HepG2 (cell line): ENCODE measurements at regions of chr10 and their contacts with region 1.

Region 1: DNA sequence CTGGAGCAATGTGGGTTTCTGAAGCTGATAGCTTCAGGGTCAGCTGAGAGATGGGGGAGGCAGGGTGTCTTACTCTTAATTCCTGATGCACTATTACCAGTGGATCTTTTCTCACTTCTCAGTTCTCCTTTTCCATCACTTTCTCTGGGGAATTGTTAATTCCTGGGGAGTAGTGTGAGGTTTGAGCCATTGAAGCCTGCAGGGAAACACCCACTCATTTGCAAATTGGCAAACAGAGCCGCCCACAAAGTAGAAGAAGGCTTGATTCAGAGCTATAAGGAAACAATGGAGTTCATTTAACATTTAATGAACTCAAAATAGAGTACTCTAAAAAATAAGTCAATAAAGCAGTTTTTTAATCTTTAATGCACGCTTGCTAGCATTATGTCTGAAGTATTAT is 4.3 kb upstream of the TECTB start:
- DNase-seq: no peak
- ATAC-seq: no peak
- H3K4me3 ChIP-seq: no peak overlapping the region
- H3K27ac ChIP-seq: peak overlapping the region; percentile 60
- H3K4me1 ChIP-seq: peaks cover 77% of the 10 kb centered on the region
- H3K27me3 ChIP-seq: no peaks in the 10 kb centered on the region
- CTCF ChIP-seq: no peak
- EP300 ChIP-seq: no peak
- POLR2A ChIP-seq: no peak
- RAD21 ChIP-seq: no peak

Region 2: DNA sequence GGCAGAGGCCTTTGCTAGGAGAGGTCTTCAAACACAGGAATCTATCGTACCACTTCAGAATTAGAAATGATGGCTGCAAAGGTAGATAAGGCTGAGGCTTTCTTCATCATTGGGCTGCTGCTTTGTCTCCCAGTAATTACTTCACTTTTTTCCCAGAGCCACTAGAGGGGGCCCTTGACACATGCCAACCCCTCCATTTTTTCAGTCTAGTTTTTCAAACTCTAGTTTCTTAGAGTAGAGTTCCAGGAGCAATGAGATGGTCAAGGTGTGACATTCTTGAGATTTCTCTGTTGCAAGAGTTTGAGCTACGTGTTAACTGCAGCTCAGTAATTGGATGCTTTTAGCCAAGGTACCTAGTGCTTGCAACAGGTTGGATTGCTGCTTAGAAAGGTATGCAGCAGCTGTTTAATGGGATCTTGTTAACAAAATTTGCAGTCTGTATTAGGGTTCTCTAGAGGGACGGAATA is 1668.5 kb before region 1 on chr10:
- CTCF ChIA-PET with region 1: no interaction called
- POLR2A ChIA-PET with region 1: no interaction called
- in situ Hi-C with region 1: no loop called
- intact Hi-C with region 1: loop called (anchors 5 kb)
- DNase-seq: peak; percentile 44
- ATAC-seq: peak; percentile 79
- H3K4me3 ChIP-seq: no peak overlapping the region
- H3K27ac ChIP-seq: no peak overlapping the region
- H3K4me1 ChIP-seq: no peaks in the 10 kb centered on the region
- H3K27me3 ChIP-seq: no peaks in the 10 kb centered on the region; a peak in 1 of 5 replicates
- CTCF ChIP-seq: peak; percentile 79
- EP300 ChIP-seq: no peak
- POLR2A ChIP-seq: no peak
- RAD21 ChIP-seq: peak; percentile 72; the same call in 1 of the 2 replicates

Region 3: DNA sequence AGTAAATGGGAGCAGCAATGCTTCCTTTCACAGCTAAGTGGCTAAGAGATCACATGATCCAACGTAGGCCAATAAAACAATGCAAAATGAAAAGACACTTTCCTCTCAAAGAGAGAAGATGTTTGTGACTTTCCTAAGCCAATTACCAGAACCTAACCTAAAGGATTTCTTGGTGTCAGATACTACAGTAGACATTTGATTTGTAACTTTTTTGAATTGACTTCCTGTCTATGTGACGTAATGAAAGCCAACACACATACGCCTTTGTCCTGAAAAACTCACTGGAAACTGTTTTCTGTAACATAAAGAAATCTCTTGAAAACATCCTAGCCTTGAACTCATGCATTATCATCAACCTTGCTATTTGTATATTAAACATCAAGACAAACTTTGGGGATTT is 512.4 kb before region 1 on chr10:
- CTCF ChIA-PET with region 1: no interaction called
- POLR2A ChIA-PET with region 1: no interaction called
- in situ Hi-C with region 1: no loop called
- intact Hi-C with region 1: no loop called
- DNase-seq: no peak
- ATAC-seq: no peak
- H3K4me3 ChIP-seq: no peak overlapping the region
- H3K27ac ChIP-seq: no peak overlapping the region
- H3K4me1 ChIP-seq: no peaks in the 10 kb centered on the region
- H3K27me3 ChIP-seq: no peaks in the 10 kb centered on the region
- CTCF ChIP-seq: no peak
- EP300 ChIP-seq: no peak
- POLR2A ChIP-seq: no peak
- RAD21 ChIP-seq: no peak

Region 4: DNA sequence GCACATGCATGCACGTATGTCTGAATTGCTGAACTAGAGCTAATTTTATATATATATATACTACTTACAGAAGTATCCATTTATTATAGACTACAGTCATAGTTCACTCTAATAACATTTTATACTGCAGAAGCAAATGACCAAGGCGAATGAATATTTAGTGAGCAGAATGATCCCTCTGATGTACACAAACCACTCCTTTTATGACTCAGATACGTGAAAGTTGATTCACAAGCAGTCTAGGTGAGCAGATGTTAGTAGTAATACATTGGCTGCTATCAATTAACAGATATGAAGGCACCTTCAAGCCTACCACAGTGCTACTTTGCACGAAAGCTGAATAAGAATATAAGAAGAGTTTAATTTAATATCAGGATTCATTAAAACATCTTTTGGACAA is 105.7 kb before region 1 on chr10:
- CTCF ChIA-PET with region 1: no interaction called
- POLR2A ChIA-PET with region 1: no interaction called
- in situ Hi-C with region 1: no loop called
- intact Hi-C with region 1: no loop called
- DNase-seq: no peak
- ATAC-seq: no peak
- H3K4me3 ChIP-seq: no peak overlapping the region
- H3K27ac ChIP-seq: no peak overlapping the region
- H3K4me1 ChIP-seq: peaks cover 22% of the 10 kb centered on the region
- H3K27me3 ChIP-seq: no peaks in the 10 kb centered on the region
- CTCF ChIP-seq: no peak
- EP300 ChIP-seq: no peak
- POLR2A ChIP-seq: no peak
- RAD21 ChIP-seq: no peak

Region 5: DNA sequence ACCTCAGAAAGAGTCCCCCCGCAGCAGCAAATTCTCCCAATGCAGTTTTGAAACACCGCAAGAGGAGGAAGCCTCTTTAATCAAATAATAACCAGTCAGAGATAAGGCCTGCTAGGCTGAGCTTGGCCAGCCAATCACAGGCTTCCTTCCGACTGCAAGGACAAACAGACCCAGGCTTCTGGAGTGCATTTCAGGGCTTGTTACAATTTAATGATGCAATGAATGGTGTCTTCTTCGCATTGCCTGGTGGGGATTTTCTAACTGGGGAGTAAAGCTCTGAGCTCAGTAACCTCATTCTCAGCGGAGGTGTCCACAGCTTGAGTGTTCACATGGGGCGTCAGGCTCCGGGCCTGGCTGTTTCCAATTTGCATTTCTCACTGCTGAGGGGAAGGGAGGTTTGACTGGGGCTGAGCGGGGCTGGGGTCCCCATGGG is 63.5 kb before region 1 on chr10:
- CTCF ChIA-PET with region 1: no interaction called
- POLR2A ChIA-PET with region 1: interaction called, 11 read pairs
- in situ Hi-C with region 1: no loop called
- intact Hi-C with region 1: no loop called
- DNase-seq: peak; percentile 72
- ATAC-seq: peak; percentile 83
- H3K4me3 ChIP-seq: no peak overlapping the region
- H3K27ac ChIP-seq: peak overlapping the region; percentile 51
- H3K4me1 ChIP-seq: peaks cover 88% of the 10 kb centered on the region
- H3K27me3 ChIP-seq: no peaks in the 10 kb centered on the region
- CTCF ChIP-seq: no peak
- EP300 ChIP-seq: no peak
- POLR2A ChIP-seq: no peak
- RAD21 ChIP-seq: no peak

Region 6: DNA sequence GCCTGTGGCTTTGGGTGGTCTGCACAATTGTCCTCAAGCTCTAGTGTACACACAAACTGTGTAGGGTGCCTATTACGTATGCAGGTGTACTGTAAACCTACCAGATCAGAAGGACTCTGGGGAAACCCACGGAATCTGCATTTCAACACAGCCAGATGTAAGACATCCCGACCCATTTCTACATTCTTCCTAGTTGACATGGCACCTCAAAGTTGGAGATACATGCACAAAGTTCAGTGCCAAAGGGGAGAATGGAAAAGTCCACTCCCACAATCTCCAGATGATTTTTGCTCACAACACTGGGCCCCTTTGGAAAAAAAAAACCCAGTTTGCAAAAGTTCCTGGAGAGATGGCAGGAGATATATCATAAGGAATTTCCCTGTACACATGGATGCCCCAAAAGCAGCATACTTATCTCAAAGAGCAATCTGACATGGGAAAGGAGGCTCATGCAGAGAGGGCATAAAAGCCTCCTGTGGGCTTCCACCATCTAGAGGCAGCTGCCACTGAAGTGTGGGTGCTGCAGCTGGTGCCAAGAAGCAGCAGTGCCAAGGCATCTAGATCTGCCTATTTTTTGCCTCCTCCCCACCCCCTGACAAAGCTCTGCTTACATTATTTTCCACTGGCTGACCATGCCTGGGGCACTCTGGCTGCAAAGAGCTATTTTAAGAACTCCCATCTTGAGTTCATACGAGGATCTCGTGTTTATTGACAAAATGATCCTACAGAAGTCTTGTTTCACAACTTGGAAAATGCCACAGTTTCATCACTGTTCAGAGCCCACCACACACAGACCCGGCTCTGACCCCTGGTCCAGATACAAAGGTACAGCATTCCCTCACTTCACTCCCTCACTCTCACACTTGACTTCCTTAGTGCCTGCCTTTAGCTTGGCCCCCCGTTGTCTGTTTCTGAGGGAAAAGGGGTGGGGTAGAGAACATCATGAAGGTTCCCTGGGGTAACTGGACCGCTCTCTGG is 17.3 kb after region 1 on chr10:
- CTCF ChIA-PET with region 1: no interaction called
- POLR2A ChIA-PET with region 1: interaction called, 37 read pairs
- in situ Hi-C with region 1: no loop called
- intact Hi-C with region 1: loop called (anchors 1 kb)
- DNase-seq: peak; percentile 76
- ATAC-seq: peak; percentile 77
- H3K4me3 ChIP-seq: peak overlapping the region; percentile 32 to 43 (median 41)
- H3K27ac ChIP-seq: peak overlapping the region; percentile 77
- H3K4me1 ChIP-seq: peaks cover 94% of the 10 kb centered on the region
- H3K27me3 ChIP-seq: no peaks in the 10 kb centered on the region
- CTCF ChIP-seq: no peak
- EP300 ChIP-seq: peak in 1 of 2 experiments; percentile 79; a peak in 2 of 4 replicates
- POLR2A ChIP-seq: peak in 1 of 2 experiments; percentile 15; a peak in 2 of 4 replicates
- RAD21 ChIP-seq: no peak

Region 7: GRCh38 chr10:112307358-112308124 is 28.7 kb after region 1 on chr10:
- CTCF ChIA-PET with region 1: no interaction called
- POLR2A ChIA-PET with region 1: interaction called, 31 read pairs
- in situ Hi-C with region 1: no loop called
- intact Hi-C with region 1: no loop called
- DNase-seq: peak; percentile 61
- ATAC-seq: peak; percentile 87
- H3K4me3 ChIP-seq: no peak overlapping the region; a peak in 1 of 6 replicates
- H3K27ac ChIP-seq: peak overlapping the region; percentile 44
- H3K4me1 ChIP-seq: peaks cover 93% of the 10 kb centered on the region
- H3K27me3 ChIP-seq: no peaks in the 10 kb centered on the region
- CTCF ChIP-seq: peak; percentile 92
- EP300 ChIP-seq: no peak; a peak in 1 of 4 replicates
- POLR2A ChIP-seq: no peak
- RAD21 ChIP-seq: peak; percentile 95

Region 8: DNA sequence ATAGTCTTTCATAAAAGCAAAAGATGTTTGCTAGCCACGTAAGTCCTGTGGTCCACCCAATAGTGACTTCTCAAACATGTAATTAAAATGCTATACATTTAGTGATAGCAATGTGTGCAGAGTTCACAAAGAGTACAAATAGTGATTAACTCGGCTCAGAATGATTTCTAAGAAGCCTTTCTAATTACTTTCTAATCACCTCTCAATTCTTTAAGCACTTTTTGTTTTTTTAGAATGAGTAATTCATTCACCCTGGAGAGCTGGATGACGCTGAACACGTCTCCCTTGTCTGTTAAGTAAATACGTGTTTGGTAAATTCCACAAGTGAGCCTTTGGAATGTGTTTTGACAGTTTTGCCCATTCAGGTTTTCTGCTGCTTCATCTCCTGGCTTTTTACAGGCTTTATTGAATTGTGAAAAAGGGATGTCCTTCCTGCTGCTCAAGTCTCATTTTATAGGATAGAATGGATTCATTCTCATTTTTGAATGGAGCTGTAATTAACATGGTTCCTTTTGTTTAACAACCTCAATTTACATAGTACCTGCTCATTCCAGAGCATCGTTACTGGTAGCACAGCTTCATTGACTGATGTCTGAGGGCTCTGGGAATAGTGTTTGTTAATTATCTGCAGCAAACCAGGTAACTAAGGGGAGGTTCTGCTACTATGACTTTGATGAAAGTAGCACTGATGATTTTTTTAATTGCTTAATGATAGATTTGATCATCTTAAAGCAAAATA is 380.2 kb after region 1 on chr10:
- CTCF ChIA-PET with region 1: no interaction called
- POLR2A ChIA-PET with region 1: no interaction called
- in situ Hi-C with region 1: no loop called
- intact Hi-C with region 1: no loop called
- DNase-seq: peak; percentile 91
- ATAC-seq: peak; percentile 93
- H3K4me3 ChIP-seq: no peak overlapping the region; a peak in 1 of 6 replicates
- H3K27ac ChIP-seq: peak overlapping the region; percentile 73
- H3K4me1 ChIP-seq: peaks cover 73% of the 10 kb centered on the region
- H3K27me3 ChIP-seq: no peaks in the 10 kb centered on the region
- CTCF ChIP-seq: no peak
- EP300 ChIP-seq: peak in 1 of 2 experiments; percentile 86; a peak in 1 of 4 replicates
- POLR2A ChIP-seq: no peak
- RAD21 ChIP-seq: no peak

Region 9: GRCh38 chr10:112741830-112742411 is 463.1 kb after region 1 on chr10:
- CTCF ChIA-PET with region 1: no interaction called
- POLR2A ChIA-PET with region 1: no interaction called
- in situ Hi-C with region 1: no loop called
- intact Hi-C with region 1: no loop called
- DNase-seq: peak; percentile 76
- ATAC-seq: no peak
- H3K4me3 ChIP-seq: no peak overlapping the region
- H3K27ac ChIP-seq: peak overlapping the region; percentile 92
- H3K4me1 ChIP-seq: peaks cover 86% of the 10 kb centered on the region
- H3K27me3 ChIP-seq: no peaks in the 10 kb centered on the region
- CTCF ChIP-seq: no peak
- EP300 ChIP-seq: peak in 1 of 2 experiments; percentile 87; a peak in 2 of 4 replicates
- POLR2A ChIP-seq: no peak
- RAD21 ChIP-seq: no peak